WTC11 (cell line): ENCODE measurements at regions of chr16 and their contacts with region 1.

Region 1: DNA sequence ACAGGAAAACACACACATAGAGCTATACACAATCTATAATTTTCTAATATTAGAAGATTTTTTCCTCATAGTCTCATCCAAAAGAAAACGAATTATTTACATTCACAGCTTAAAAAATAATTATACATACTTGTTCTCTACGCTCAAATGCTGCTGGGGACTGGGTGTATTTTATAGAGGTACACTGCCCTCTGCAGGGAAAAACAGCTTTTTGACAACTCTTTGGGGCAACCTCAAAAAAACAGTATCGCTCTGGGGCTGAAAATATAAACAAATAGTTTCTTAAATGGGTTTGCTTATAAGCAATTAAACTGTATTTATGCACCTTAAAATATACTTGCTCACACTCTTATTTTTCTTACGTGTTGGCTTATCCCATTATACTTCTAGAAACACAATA is 261.8 kb upstream of the PSMD7 start:
- DNase-seq: no peak
- ATAC-seq: peak; percentile 40; the same call in 1 of the 2 replicates
- H3K4me3 Mint-ChIP-seq: no peak overlapping the region
- H3K27ac Mint-ChIP-seq: 0 out of 2 replicates have a peak overlapping the region, but pooled peaks have one; percentile 16
- H3K4me1 Mint-ChIP-seq: peaks cover 71% of the 10 kb centered on the region
- H3K27me3 Mint-ChIP-seq: peaks cover 4% of the 10 kb centered on the region; the same call in 1 of the 2 replicates
- CTCF ChIP-seq: peak; percentile 42

Region 2: DNA sequence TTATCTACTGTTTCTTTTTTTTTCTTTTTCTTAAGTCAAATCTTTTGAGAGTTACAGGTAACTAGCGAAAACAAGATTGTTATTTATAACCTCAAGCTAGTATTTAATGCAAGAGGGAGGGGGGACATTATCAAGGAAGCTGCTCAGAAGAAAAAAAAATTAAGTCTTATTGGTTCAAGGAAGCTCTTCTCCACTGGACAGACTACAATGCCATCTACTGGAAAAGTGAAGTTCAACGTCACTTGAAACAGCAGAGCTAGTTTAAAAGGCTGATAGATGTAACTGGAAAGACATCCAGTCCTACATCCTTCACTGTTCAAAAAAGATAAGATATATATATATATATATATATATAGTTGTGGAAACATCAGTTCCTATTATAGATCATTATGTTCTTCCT is 156.3 kb before region 1 on chr16:
- CTCF ChIA-PET with region 1: interaction called, 13 read pairs
- POLR2A ChIA-PET with region 1: no interaction called
- DNase-seq: no peak
- ATAC-seq: peak; percentile 30; the same call in 1 of the 2 replicates
- H3K4me3 Mint-ChIP-seq: no peak overlapping the region
- H3K27ac Mint-ChIP-seq: no peak overlapping the region
- H3K4me1 Mint-ChIP-seq: peaks cover 22% of the 10 kb centered on the region
- H3K27me3 Mint-ChIP-seq: no peaks in the 10 kb centered on the region
- CTCF ChIP-seq: no peak

Region 3: DNA sequence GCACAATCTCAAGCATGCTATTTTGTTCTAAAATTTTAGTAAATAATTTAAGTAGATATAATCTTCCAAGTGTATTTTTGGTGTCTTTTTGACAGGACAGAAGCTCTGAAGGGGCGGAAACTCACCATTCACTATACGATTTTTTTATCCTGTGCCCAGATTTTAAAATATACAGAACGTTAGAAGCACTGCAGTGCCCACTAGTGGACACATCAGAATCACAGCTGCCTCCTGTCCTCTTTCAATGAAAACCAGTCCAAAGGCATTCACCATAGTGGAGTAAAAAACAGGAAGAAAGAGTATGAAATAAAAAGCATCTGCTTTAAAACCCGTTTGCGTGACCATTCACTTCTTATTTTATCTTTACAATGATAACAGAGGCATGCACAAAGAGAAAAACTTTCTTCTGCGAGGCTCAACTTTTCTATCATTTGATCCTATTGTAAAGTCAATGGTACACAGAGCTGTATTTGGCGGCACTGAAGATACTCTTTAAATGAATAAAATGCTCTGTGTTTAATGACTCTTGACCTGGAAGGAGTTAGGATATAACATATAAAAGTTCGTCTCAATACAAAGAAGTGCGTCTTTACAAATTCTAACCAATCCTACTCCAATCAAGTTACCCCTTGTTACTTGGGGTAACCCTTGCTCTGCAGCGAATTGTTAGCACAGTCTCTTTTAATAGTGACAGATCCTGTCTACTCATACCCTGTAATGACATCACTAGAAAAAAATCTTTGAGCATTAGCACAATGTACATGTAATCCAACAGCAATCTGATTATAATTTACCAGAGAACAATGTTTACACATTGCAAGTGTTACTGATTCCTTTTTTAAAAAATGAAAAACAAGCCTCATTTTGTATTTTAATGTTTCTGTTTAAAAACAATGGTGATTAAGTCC is 78.0 kb before region 1 on chr16:
- CTCF ChIA-PET with region 1: interaction called, 42 read pairs
- POLR2A ChIA-PET with region 1: no interaction called
- DNase-seq: peak; percentile 73
- ATAC-seq: peak; percentile 67
- H3K4me3 Mint-ChIP-seq: no peak overlapping the region
- H3K27ac Mint-ChIP-seq: no peak overlapping the region
- H3K4me1 Mint-ChIP-seq: no peaks in the 10 kb centered on the region; the same call in 1 of the 2 replicates
- H3K27me3 Mint-ChIP-seq: no peaks in the 10 kb centered on the region; the same call in 1 of the 2 replicates
- CTCF ChIP-seq: peak; percentile 42; the same call in 1 of the 2 replicates

Region 4: DNA sequence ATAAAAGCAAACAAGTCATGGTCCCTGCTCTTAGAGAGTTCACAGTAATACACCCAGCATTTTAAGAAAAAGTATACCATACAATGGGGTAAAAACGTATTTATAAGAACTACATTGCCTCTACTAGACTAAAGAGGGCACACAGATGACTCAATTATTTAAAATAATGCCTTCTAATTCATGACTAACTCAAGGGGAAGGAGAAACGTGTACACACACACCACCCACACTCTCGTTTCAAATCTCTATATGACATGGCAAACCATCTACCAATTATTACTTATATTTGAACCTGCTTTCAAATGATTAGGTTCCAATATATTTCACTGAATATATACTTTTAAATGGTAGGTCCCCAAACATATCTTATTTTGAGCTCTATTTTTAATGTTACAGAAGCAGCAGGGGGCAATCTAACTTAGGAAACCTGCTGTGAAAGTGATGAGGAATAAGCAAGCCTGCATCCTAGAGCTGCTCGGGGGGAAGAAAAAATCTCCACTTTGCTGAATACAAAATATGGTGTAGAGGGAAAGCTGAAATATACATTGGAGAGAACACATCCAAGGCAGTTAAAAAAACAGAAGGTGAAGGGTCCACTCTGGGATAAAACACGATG is 29.4 kb after region 1 on chr16:
- CTCF ChIA-PET with region 1: interaction called, 10 read pairs
- POLR2A ChIA-PET with region 1: no interaction called
- DNase-seq: no peak
- ATAC-seq: no peak
- H3K4me3 Mint-ChIP-seq: no peak overlapping the region
- H3K27ac Mint-ChIP-seq: no peak overlapping the region
- H3K4me1 Mint-ChIP-seq: peaks cover 32% of the 10 kb centered on the region
- H3K27me3 Mint-ChIP-seq: no peaks in the 10 kb centered on the region
- CTCF ChIP-seq: no peak

Region 5: DNA sequence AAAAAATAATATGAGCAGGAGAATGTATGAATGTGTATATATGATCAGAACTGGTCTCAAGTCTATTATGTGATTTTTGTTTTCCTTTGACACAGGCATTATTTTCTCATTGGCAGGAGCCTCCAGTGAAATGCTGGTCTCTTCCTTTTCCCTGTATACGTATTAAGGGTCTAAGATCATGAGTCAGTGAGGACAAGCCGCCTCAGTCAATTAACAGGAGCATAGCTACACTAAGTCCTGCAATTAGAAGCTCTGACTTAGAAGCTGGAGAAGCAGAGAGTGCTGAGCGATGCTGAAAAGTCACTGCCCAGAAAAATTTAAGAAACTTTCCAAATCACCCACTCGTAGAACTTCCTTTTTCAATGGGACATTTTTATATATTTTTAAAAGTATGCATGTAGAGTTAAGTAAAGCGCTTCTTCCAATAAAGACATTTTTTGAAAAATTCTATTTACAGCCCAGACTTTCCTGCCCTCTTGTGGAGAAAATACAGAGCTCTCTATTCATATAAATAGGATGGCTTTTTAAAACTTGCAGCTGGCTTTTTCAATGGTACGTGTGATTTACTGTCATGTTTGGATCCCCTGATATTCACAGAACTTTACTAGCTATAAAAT is 191.6 kb after region 1 on chr16:
- CTCF ChIA-PET with region 1: interaction called, 34 read pairs
- POLR2A ChIA-PET with region 1: no interaction called
- DNase-seq: no peak
- ATAC-seq: peak; percentile 65
- H3K4me3 Mint-ChIP-seq: peak overlapping the region; percentile 47
- H3K27ac Mint-ChIP-seq: no peak overlapping the region
- H3K4me1 Mint-ChIP-seq: peaks cover 13% of the 10 kb centered on the region
- H3K27me3 Mint-ChIP-seq: no peaks in the 10 kb centered on the region
- CTCF ChIP-seq: no peak